ENCODE measurements at regions of chr14 and their contacts with region 1.

Region 1: DNA sequence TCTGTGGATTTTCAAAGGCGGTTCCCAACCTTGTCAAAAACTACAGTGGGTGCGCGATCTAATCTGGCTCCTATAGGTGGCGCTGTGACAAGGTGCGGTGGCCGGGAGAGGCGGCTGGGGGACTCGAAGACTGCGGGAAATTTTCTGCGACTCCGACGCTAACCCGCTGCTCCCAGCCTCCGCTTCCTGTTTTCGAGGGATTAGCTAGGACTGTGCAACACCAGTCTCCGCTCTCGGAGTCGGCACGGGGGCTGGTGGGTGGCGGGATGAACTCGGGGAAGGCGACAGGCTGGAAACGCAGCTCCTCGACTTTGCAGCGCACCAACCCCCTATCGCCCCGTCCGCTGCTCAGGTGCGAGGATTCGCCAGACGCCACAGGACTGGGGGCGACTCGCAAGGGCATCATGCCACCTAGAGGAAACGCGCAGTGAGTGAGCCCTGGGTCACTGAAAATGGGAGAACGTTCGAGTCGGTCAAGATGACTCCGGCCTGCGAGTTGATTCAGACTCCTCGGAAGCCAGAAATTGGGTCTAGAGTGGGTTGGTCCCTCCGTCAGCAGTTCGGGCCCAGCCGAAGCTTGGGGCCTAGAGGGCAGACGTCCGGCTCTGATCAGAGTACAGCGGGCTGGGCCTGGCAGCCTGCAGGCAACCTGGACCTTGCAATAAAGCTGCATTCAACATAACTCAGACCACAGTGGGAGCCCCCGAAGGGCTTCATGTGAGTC is 5.5 kb upstream of the PAX9 start:
- DNase-seq: peak; percentile 59
- H3K4me3 Mint-ChIP-seq: no peak overlapping the region
- H3K27ac Mint-ChIP-seq: no peak overlapping the region
- H3K4me1 Mint-ChIP-seq: peaks cover 7% of the 10 kb centered on the region
- H3K27me3 Mint-ChIP-seq: peaks cover 84% of the 10 kb centered on the region

Region 2: DNA sequence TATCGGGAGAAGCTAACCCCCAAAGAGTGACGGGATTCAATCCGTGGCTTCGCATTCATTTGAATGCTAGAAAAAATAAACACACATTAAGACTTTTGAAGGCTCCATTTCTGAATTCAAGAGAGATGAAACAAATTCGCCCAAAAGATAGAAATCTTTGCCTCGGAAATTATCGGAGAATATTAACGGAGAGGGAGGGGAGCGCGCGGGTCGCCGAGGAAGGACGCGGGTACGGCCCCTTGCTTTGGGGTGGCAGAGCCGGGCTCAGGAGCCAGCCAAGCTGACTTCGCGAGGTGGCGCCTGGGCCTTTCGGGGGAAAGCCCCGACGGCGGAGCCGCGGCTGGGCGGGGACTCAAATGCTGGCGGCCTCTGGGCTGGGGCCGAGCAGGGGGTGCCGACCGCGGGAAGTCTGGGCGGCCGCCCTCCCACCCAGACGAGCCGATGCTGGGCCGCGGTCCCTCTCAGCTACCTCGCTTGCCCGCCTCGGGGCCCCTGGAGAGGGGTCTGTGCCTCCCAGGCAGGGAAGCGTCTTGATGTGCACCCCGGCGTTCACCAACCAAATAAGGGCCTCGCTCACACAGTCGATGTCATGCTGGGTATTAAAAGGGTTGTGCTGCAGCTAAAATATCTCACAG is 150.8 kb before region 1 on chr14:
- intact Hi-C with region 1: loop called (anchors 5 kb)
- DNase-seq: no peak
- H3K4me3 Mint-ChIP-seq: no peak overlapping the region
- H3K27ac Mint-ChIP-seq: no peak overlapping the region
- H3K4me1 Mint-ChIP-seq: peaks cover 4% of the 10 kb centered on the region
- H3K27me3 Mint-ChIP-seq: peaks cover 80% of the 10 kb centered on the region

Region 3: DNA sequence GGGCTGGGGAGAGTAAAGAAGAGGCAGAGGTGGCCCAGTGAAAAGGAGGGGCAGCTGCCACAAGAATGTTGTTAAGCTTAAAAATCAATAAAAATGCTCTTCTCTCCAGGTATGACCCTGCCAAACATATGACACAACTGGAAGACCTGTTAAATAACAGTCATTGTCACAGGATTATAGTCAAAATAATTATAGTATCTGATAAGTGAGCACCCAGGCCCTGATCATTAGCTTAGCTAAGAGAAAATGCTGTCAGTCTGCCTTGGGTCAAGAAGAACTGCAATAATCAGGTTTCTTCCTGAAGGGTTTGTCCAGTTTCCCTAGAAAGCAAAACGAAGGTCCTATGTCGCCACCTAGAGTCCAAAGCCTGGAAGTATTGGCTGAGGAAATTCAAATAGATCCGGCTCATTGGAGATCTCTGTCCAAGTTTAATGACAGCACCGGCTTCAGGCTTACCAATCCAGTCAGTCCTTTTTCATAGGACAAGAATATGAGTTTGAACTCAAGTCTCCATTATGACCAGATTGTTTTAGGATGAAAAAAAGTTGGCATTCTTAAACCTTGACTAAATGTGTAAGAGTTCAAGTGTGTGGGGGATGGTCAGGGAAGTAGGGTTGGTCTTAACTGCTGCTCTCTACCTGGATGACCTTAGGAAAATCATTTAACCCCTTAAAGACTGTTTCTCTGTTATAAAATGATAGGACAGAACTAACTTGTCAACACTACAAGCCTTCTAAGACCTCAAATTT is 51.2 kb before region 1 on chr14:
- intact Hi-C with region 1: no loop called
- DNase-seq: peak; percentile 81
- H3K4me3 Mint-ChIP-seq: no peak overlapping the region
- H3K27ac Mint-ChIP-seq: no peak overlapping the region
- H3K4me1 Mint-ChIP-seq: no peaks in the 10 kb centered on the region
- H3K27me3 Mint-ChIP-seq: peaks cover 2% of the 10 kb centered on the region

Region 4: DNA sequence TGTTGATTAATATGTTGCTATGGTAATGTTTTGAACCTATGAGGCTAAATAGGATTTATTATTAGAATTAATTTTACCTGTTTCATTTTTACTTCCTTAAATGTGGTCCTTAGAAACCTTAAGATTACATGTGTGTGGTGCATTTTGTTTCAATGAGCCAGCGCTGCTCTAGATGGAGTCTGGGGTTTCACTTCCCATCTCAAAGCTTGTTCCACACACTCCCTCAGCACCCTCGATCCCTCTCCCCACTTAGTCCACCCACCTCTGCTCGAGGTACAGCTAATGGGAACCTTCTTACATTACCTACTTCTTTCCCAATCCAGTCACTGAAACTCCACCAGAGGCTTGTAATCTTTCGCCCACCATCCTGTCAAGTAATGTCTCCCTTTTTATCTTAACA is 210.7 kb after region 1 on chr14:
- intact Hi-C with region 1: no loop called
- DNase-seq: no peak
- H3K4me3 Mint-ChIP-seq: no peak overlapping the region
- H3K27ac Mint-ChIP-seq: no peak overlapping the region
- H3K4me1 Mint-ChIP-seq: no peaks in the 10 kb centered on the region
- H3K27me3 Mint-ChIP-seq: no peaks in the 10 kb centered on the region

Region 5: GRCh38 chr14:38210587-38211216 is 1554.6 kb after region 1 on chr14:
- intact Hi-C with region 1: loop called (anchors 5 kb)
- DNase-seq: no peak
- H3K4me3 Mint-ChIP-seq: no peak overlapping the region
- H3K27ac Mint-ChIP-seq: no peak overlapping the region
- H3K4me1 Mint-ChIP-seq: peaks cover 3% of the 10 kb centered on the region
- H3K27me3 Mint-ChIP-seq: peaks cover 67% of the 10 kb centered on the region